Mucosa of descending colon (tissue), 3 donors: ENCODE measurements at regions of chr7 and their contacts with region 1.

Region 1: GRCh38 chr7:39580149-39580874 is 14.1 kb downstream of the YAE1 start:
- DNase-seq: peak in 2 of 3 donors; percentile 66 to 83
- ATAC-seq: peak; percentile 100
- H3K4me3 ChIP-seq: no peak overlapping the region
- H3K4me1 ChIP-seq: no peaks in the 10 kb centered on the region
- CTCF ChIP-seq: peak; percentile 64

Region 2: DNA sequence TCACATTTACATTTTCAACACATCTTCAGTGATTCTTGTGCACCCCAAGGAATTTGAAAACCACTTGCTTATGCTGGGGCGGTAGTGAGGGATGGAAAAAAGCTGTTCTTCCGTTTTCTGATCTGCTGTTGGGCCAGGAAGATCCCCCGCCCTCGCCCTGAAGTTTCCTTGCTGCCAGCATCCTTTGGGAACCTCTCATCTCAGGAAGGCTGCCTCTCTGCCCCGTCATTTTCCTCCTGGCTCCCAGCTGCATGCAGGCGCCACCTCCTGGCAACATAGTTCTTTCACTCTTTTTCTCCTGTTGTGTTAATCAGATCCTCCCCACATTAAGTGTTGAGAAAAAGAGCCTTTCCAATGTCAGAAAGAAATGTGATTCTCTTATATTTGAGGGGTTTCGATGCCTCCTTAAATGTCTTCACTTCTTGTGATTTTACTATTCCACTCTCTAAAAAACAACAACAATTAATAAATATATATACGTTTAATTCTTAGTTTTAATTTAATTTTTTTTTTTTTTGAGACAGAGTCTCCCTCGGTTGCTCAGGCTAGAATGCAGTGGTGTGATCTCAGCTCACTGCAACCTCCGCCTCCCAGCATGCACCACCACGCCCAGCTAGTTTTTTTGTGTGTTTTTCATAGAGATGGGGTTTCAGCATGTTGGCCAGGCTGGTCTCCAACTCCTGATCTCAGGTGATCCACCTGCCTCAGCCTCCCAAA is 165.9 kb after region 1 on chr7:
- intact Hi-C with region 1: loop called (anchors 1 to 10 kb)
- DNase-seq: peak; percentile 56 to 92 (median 63)
- ATAC-seq: peak; percentile 84
- H3K4me3 ChIP-seq: no peak overlapping the region
- H3K4me1 ChIP-seq: peaks cover 3% of the 10 kb centered on the region
- CTCF ChIP-seq: no peak